Astrocyte of the cerebellum (primary cell): ENCODE measurements at regions of chr9 and their contacts with region 1.

Region 1: GRCh38 chr9:106874652-106875051 is 11.7 kb downstream of the ZNF462 start:
- DNase-seq: no peak
- H3K4me3 ChIP-seq: no peak overlapping the region
- CTCF ChIP-seq: no peak

Region 2: GRCh38 chr9:106784076-106784475 is 90.6 kb before region 1 on chr9:
- in situ Hi-C with region 1: no loop called
- DNase-seq: no peak
- H3K4me3 ChIP-seq: no peak overlapping the region
- CTCF ChIP-seq: no peak

Region 3: GRCh38 chr9:106799146-106799545 is 75.5 kb before region 1 on chr9:
- in situ Hi-C with region 1: loop called (anchors 5 kb)
- DNase-seq: peak; percentile 68
- H3K4me3 ChIP-seq: no peak overlapping the region
- CTCF ChIP-seq: no peak